ENCODE measurements at regions of chr11 and their contacts with region 1.

Region 1: DNA sequence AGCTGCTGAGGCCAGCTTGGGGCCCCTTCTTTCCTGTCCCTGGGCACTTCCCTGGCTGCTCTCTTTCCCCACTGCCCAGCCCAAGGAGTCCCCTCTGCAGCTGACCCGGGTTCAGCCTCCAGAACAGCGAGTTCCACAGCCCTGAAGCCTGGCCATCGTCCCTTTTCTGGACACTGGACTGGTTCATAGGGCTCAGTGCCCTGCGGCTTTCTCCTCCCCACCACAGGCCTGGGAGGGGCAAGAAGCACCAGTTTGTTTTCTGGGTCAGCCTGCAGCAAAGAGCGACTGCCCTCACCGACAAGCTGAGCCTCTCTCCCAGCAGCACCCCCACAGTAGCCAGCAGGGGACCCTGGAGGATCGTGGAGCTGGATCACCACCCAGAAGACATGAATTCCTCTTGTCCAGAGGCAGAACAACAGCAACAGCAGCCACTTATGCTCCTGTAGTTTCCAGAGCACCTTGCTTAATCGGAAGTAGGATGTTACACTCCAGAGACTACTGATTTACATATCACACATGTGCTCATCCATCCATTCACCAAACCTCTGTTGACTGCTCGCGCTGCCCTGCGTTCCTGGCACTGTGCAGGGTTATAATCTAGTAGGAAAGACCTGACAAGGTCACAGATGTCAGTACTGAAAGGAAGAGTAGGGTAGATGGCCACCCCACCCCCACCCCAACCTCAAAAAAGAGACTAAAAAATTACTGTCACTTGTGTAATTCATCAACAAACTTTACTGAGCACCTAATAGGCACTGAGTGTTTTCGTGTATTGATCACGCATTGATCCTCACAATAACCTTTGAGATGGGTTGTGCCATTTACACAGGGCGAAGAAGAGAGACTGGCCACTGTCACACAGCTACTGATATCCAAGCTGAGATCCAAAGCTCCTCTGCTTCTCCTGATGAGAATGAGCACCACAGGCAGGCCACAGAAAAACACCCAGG is 13.0 kb upstream of the CXCR5 start:
- DNase-seq: peak in 3 of 10 donors; percentile 14 to 20 (median 17)
- ATAC-seq: peak; percentile 37 to 39
- H3K4me3 Mint-ChIP-seq: peak overlapping the region; percentile 73 to 90 (median 84)
- H3K27ac Mint-ChIP-seq: peak overlapping the region; percentile 97 to 100 (median 99)
- H3K4me1 Mint-ChIP-seq: peaks cover 33 to 66% (median 57%) of the 10 kb centered on the region in 4 donors
- H3K27me3 Mint-ChIP-seq: no peaks in the 10 kb centered on the region

Region 2: DNA sequence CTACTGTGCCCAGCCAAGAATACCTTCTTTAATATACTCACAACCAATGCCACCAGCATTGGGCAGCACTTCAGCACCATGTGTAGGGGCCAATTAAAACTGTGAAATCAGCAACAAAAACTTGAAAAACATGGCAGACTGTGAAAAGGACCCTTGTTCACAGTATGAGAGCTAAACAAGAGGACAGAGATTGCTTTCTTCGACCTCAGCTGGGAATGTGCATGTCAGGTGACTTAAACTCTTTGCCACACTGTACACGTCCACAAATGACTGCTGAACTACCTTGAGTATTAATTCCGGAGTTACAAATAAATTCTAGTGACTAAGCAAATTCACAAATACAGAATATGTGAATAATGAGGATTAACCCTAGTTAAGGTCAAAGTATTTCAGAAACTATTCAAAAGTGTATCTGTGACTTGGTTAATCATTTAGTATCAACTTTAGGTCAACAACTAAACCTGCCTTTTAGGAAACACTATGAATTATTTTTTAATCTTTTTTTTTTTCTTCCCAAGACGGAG is 112.7 kb before region 1 on chr11:
- POLR2A ChIA-PET with region 1: no interaction called
- DNase-seq: no peak
- ATAC-seq: no peak
- H3K4me3 Mint-ChIP-seq: no peak overlapping the region
- H3K27ac Mint-ChIP-seq: peak overlapping the region in 6 of 10 donors; percentile 40 to 79 (median 49)
- H3K4me1 Mint-ChIP-seq: peaks cover 5 to 11% (median 6%) of the 10 kb centered on the region in 4 donors
- H3K27me3 Mint-ChIP-seq: no peaks in the 10 kb centered on the region

Region 3: GRCh38 chr11:118768690-118769089 is 102.0 kb before region 1 on chr11:
- POLR2A ChIA-PET with region 1: no interaction called
- DNase-seq: no peak
- ATAC-seq: peak in 1 of 2 donors; percentile 21
- H3K4me3 Mint-ChIP-seq: peak overlapping the region in 8 of 10 donors; percentile 5 to 64 (median 50)
- H3K27ac Mint-ChIP-seq: peak overlapping the region; percentile 41 to 90 (median 76)
- H3K4me1 Mint-ChIP-seq: peaks cover 19 to 82% (median 69%) of the 10 kb centered on the region in 4 donors
- H3K27me3 Mint-ChIP-seq: no peaks in the 10 kb centered on the region

Region 4: DNA sequence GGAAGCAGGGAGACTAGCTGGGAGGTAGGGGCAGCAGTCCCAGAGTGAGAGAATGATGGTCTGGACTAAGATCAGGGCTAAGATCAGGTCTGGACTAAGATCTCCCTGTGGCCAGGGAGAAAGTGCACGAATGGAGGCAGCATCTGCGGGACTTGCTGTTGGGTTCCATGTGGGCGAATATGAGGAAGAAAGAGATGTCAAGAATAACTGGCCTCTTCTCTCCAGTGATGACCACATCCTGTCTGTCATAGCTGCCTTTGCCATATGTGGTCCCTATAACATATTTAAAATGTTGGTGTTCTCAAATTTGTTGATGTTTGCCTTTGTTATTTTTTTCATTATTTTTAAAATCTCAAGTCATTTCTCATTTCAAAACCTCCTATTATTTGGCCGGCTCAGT is 14.4 kb before region 1 on chr11:
- POLR2A ChIA-PET with region 1: interaction called, 17 read pairs
- DNase-seq: no peak
- ATAC-seq: no peak
- H3K4me3 Mint-ChIP-seq: no peak overlapping the region
- H3K27ac Mint-ChIP-seq: peak overlapping the region in 2 of 10 donors; percentile 3 to 57
- H3K4me1 Mint-ChIP-seq: peaks cover 9 to 40% (median 25%) of the 10 kb centered on the region in 4 donors
- H3K27me3 Mint-ChIP-seq: no peaks in the 10 kb centered on the region

Region 5: DNA sequence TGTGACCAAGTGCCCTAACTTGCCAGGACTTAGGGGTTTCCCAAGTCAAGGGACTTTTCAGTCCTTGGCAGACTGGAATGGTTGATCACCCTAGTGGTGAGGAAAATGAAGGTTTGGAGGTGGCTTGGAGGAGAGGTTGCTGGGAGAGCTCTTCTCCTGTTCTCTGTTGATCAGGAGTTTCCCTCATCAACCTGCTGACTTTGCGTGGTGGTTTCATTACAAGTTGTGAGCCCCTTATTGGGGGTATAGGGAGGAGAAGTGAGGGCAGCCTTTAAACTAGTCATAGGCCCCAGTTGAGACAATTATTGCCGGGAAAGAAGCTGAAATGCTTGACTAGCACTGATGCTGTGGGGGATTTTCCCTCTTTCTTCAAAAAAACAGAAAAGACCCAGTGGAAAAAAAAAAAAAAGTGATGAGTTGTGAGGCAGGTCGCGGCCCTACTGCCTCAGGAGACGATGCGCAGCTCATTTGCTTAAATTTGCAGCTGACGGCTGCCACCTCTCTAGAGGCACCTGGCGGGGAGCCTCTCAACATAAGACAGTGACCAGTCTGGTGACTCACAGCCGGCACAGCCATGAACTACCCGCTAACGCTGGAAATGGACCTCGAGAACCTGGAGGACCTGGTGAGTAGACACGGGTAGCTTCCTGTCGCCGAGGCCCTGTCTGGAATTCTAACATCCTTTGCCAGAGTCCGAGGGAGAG is 12.8 kb after region 1 on chr11 and contains the start of gene CXCR5:
- POLR2A ChIA-PET with region 1: interaction called, 17 read pairs
- DNase-seq: peak in 2 of 10 donors; percentile 38 to 60
- ATAC-seq: peak; percentile 40 to 62
- H3K4me3 Mint-ChIP-seq: peak within 1 kb of the TSS in 4 of 10 donors; percentile 22 to 88 (median 44)
- H3K27ac Mint-ChIP-seq: peak within 1 kb of the TSS; percentile 22 to 84 (median 72)
- H3K4me1 Mint-ChIP-seq: peaks cover 37 to 81% (median 79%) of the 10 kb centered on the region in 4 donors
- H3K27me3 Mint-ChIP-seq: no peaks in the 10 kb centered on the region
- polyA plus RNA-seq, gene CXCR5: 0.17 to 0.63 (median 0.29) TPM

Region 6: DNA sequence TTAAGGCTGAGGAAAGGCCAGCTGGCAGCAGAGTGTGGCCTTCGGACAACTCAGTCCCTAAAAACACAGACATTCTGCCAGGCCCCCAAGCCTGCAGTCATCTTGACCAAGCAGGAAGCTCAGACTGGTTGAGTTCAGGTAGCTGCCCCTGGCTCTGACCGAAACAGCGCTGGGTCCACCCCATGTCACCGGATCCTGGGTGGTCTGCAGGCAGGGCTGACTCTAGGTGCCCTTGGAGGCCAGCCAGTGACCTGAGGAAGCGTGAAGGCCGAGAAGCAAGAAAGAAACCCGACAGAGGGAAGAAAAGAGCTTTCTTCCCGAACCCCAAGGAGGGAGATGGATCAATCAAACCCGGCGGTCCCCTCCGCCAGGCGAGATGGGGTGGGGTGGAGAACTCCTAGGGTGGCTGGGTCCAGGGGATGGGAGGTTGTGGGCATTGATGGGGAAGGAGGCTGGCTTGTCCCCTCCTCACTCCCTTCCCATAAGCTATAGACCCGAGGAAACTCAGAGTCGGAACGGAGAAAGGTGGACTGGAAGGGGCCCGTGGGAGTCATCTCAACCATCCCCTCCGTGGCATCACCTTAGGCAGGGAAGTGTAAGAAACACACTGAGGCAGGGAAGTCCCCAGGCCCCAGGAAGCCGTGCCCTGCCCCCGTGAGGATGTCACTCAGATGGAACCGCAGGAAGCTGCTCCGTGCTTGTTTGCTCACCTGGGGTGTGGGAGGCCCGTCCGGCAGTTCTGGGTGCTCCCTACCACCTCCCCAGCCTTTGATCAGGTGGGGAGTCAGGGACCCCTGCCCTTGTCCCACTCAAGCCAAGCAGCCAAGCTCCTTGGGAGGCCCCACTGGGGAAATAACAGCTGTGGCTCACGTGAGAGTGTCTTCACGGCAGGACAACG is 24.7 kb after region 1 on chr11:
- POLR2A ChIA-PET with region 1: interaction called, 130 read pairs
- DNase-seq: peak; percentile 63 to 88 (median 80)
- ATAC-seq: peak; percentile 72 to 85
- H3K4me3 Mint-ChIP-seq: peak overlapping the region; percentile 61 to 91 (median 78)
- H3K27ac Mint-ChIP-seq: peak overlapping the region; percentile 92 to 99 (median 98)
- H3K4me1 Mint-ChIP-seq: peaks cover 44 to 88% (median 84%) of the 10 kb centered on the region in 4 donors
- H3K27me3 Mint-ChIP-seq: no peaks in the 10 kb centered on the region

Region 7: DNA sequence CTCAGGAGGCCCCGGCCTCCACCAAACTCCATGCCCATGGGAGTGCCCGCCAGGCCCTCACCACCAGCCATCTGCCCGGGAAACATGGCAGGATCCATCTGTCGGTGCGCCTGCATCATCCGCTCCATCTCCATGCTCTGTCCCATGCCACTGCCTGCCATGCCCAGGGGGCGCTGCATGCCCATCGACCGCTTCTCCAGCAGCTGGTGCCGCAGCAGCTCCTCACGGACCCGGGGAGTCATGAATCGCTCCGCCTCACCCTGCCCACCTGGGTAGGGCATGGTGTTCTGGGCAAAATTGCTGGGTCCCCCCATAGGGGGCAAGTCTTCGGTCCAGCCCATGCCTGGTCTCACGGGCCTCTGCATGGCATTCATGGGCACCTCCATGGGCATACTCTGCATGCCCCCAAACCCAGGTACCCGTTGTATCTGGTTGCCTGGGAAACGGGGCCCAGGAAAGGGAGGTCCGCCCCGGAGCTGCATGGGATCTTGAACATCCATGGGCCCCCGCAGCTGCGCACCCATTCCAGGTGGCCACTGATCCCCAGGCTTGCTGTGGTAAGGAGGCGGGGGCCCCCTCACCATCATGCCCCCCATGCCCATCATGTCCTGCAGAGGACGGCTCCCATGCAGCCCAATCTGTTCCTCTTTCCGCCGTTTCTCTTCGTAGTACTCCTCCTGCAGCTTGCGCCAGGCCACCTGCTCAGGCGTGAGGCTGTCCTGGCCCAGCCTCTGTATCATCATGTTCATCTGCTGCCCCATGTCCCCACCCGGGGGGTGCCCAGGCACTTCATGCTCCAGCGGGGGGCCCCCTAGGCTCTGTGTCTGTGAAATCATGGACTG is 31.0 kb after region 1 on chr11:
- POLR2A ChIA-PET with region 1: interaction called, 130 read pairs
- DNase-seq: no peak
- ATAC-seq: no peak
- H3K4me3 Mint-ChIP-seq: no peak overlapping the region
- H3K27ac Mint-ChIP-seq: peak overlapping the region; percentile 41 to 92 (median 80)
- H3K4me1 Mint-ChIP-seq: peaks cover 21 to 66% (median 41%) of the 10 kb centered on the region in 4 donors
- H3K27me3 Mint-ChIP-seq: no peaks in the 10 kb centered on the region

Region 8: GRCh38 chr11:118907051-118908042 is 36.7 kb after region 1 on chr11:
- POLR2A ChIA-PET with region 1: interaction called, 126 read pairs
- DNase-seq: peak; percentile 70 to 96 (median 86)
- ATAC-seq: peak; percentile 47 to 59
- H3K4me3 Mint-ChIP-seq: peak overlapping the region; percentile 42 to 94 (median 72)
- H3K27ac Mint-ChIP-seq: peak overlapping the region; percentile 88 to 98 (median 96)
- H3K4me1 Mint-ChIP-seq: peaks cover 31 to 67% (median 53%) of the 10 kb centered on the region in 4 donors
- H3K27me3 Mint-ChIP-seq: no peaks in the 10 kb centered on the region

Region 9: GRCh38 chr11:118928108-118928870 is 57.6 kb after region 1 on chr11:
- POLR2A ChIA-PET with region 1: interaction called, 52 read pairs
- DNase-seq: peak; percentile 85 to 99 (median 98)
- ATAC-seq: peak; percentile 56 to 70
- H3K4me3 Mint-ChIP-seq: peak overlapping the region; percentile 93 to 99 (median 96)
- H3K27ac Mint-ChIP-seq: peak overlapping the region; percentile 96 to 100 (median 100)
- H3K4me1 Mint-ChIP-seq: peaks cover 37 to 61% (median 51%) of the 10 kb centered on the region in 4 donors
- H3K27me3 Mint-ChIP-seq: peaks cover 0 to 2% (median 0%) of the 10 kb centered on the region in 5 donors

Region 10: GRCh38 chr11:118948000-118948399 is 77.3 kb after region 1 on chr11:
- POLR2A ChIA-PET with region 1: no interaction called
- DNase-seq: no peak
- ATAC-seq: no peak
- H3K4me3 Mint-ChIP-seq: no peak overlapping the region
- H3K27ac Mint-ChIP-seq: no peak overlapping the region
- H3K4me1 Mint-ChIP-seq: peaks cover 4 to 15% (median 10%) of the 10 kb centered on the region in 4 donors
- H3K27me3 Mint-ChIP-seq: peaks cover 0 to 3% (median 0%) of the 10 kb centered on the region in 5 donors

Region 11: GRCh38 chr11:119030329-119031049 is 159.8 kb after region 1 on chr11 and contains the start of gene SLC37A4:
- POLR2A ChIA-PET with region 1: no interaction called
- DNase-seq: peak; percentile 96 to 99 (median 98)
- ATAC-seq: peak; percentile 87 to 89
- H3K4me3 Mint-ChIP-seq: peak within 1 kb of the TSS; percentile 76 to 94 (median 90)
- H3K27ac Mint-ChIP-seq: peak within 1 kb of the TSS; percentile 37 to 96 (median 88)
- H3K4me1 Mint-ChIP-seq: peaks cover 16 to 22% (median 20%) of the 10 kb centered on the region in 4 donors
- H3K27me3 Mint-ChIP-seq: no peaks in the 10 kb centered on the region
- polyA plus RNA-seq, gene SLC37A4: 9.7 to 12.8 (median 12.1) TPM

Measured in naive thymus-derived CD8-positive, alpha-beta T cell (primary cell).